AG04449 (cell line): ENCODE measurements at regions of chr21 and their contacts with region 1.

Region 1: GRCh38 chr21:36747815-36748383 is 49.0 kb downstream of the SIM2 start:
- DNase-seq: no peak
- H3K4me3 ChIP-seq: peak overlapping the region; percentile 49
- CTCF ChIP-seq: peak; percentile 53

Region 2: GRCh38 chr21:36330904-36331303 is 417.0 kb before region 1 on chr21:
- CTCF ChIA-PET with region 1: no interaction called
- POLR2A ChIA-PET with region 1: no interaction called
- DNase-seq: no peak
- H3K4me3 ChIP-seq: no peak overlapping the region
- CTCF ChIP-seq: peak; percentile 73

Region 3: DNA sequence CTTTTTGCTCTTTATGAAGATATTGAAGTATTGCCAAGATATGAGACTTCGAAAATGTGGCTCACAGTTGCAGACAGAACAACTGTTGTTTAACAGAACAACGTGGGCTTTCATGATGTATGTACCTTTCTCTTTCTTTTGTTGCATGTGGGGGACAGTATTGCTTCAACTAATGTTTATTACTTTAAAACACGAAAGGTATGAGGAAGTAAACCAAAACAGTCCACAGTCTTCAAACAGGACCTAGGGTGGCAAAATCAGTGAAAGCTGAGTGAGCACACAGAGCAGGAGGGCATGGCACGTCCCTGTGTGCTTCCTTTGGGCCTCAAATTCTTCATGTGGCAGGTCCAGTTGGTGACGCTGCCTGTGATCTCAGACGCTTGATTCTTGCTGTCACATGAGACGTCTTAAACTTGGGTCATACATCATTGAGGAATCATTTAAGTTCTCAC is 370.5 kb before region 1 on chr21:
- CTCF ChIA-PET with region 1: no interaction called
- POLR2A ChIA-PET with region 1: no interaction called
- DNase-seq: no peak
- H3K4me3 ChIP-seq: no peak overlapping the region
- CTCF ChIP-seq: no peak

Region 4: GRCh38 chr21:36735724-36736325 is 12.1 kb before region 1 on chr21:
- CTCF ChIA-PET with region 1: interaction called, 47 read pairs
- POLR2A ChIA-PET with region 1: no interaction called
- DNase-seq: no peak
- H3K4me3 ChIP-seq: no peak overlapping the region
- CTCF ChIP-seq: no peak

Region 5: GRCh38 chr21:36917471-36918158 is 169.7 kb after region 1 on chr21:
- CTCF ChIA-PET with region 1: interaction called, 15 read pairs
- POLR2A ChIA-PET with region 1: no interaction called
- DNase-seq: no peak
- H3K4me3 ChIP-seq: no peak overlapping the region
- CTCF ChIP-seq: peak; percentile 82